IMR-90 (cell line): ENCODE measurements at regions of chr6 and their contacts with region 1.

Region 1: DNA sequence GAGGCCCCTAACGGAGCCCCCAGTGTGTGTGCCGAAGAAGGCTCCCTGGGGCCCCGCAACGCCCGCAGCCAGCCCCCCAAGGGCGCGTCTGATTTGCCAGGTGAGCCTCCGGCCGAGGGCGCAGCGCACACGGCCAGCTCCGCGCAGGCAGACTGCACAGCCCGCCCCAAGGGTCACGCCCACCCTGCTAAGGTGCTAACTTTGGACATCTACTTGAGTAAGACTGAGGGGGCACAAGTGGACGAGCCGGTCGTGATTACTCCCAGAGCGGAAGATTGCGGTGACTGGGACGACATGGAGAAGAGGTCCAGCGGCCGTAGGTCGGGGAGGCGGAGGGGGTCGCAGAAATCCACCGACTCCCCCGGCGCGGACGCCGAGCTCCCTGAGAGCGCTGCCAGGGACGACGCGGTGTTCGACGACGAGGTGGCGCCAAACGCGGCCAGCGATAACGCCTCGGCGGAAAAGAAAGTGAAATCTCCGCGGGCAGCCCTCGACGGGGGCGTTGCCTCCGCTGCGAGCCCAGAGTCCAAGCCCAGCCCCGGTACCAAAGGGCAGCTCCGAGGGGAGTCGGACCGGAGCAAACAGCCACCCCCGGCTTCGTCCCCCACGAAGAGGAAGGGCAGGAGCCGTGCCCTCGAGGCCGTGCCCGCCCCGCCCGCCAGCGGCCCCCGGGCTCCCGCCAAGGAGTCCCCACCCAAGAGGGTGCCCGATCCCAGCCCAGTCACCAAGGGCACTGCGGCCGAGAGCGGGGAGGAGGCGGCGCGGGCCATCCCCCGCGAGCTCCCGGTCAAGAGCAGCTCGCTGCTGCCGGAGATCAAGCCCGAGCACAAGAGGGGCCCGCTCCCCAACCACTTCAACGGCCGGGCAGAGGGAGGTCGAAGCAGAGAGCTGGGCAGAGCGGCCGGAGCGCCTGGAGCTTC is 117.0 kb downstream of the RTN4IP1 start:
- DNase-seq: no peak
- ATAC-seq: peak; percentile 70
- H3K4me3 ChIP-seq: peak overlapping the region; percentile 52
- H3K27ac ChIP-seq: no peak overlapping the region
- H3K4me1 ChIP-seq: peaks cover 7% of the 10 kb centered on the region; the same call in 1 of the 2 replicates
- H3K27me3 ChIP-seq: peaks cover 30% of the 10 kb centered on the region
- CTCF ChIP-seq: peak; percentile 30
- POLR2A ChIP-seq: no peak
- RAD21 ChIP-seq: no peak

Region 2: DNA sequence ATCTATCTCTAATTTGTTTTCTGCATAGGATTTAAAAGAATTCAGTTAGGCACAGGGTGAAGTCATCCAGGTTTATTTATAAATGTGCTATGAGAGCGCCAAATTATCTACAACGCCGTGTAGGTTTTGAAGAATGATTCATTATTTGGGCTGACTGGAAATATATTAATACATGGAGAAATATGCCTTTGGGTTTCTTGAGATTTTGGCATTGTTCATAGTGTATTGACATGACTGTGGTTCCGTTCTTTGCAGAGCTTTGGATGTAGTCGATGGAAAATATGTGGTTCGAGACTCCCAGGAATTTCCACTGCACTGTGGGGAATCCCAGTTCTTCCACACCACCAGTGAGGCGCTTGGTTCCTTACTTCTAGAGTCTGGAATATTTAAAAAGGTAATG is 60.9 kb before region 1 on chr6:
- CTCF ChIA-PET with region 1: interaction called, 3 read pairs
- POLR2A ChIA-PET with region 1: no interaction called
- dilution Hi-C with region 1: no loop called
- in situ Hi-C with region 1: loop called (anchors 10 kb)
- intact Hi-C with region 1: loop called (anchors 2 kb)
- DNase-seq: no peak
- ATAC-seq: no peak
- H3K4me3 ChIP-seq: no peak overlapping the region
- H3K27ac ChIP-seq: no peak overlapping the region
- H3K4me1 ChIP-seq: no peaks in the 10 kb centered on the region
- H3K27me3 ChIP-seq: peaks cover 15% of the 10 kb centered on the region
- CTCF ChIP-seq: no peak
- POLR2A ChIP-seq: no peak
- RAD21 ChIP-seq: no peak

Region 3: GRCh38 chr6:106527966-106528365 is 15.7 kb after region 1 on chr6:
- CTCF ChIA-PET with region 1: no interaction called
- POLR2A ChIA-PET with region 1: no interaction called
- dilution Hi-C with region 1: no loop called
- in situ Hi-C with region 1: no loop called
- intact Hi-C with region 1: loop called (anchors 2 kb)
- DNase-seq: peak; percentile 98
- ATAC-seq: peak; percentile 75
- H3K4me3 ChIP-seq: no peak overlapping the region
- H3K27ac ChIP-seq: no peak overlapping the region
- H3K4me1 ChIP-seq: peaks cover 5% of the 10 kb centered on the region
- H3K27me3 ChIP-seq: no peaks in the 10 kb centered on the region
- CTCF ChIP-seq: no peak
- POLR2A ChIP-seq: no peak
- RAD21 ChIP-seq: no peak

Region 4: GRCh38 chr6:106556368-106556960 is 44.2 kb after region 1 on chr6:
- CTCF ChIA-PET with region 1: interaction called, 4 read pairs
- POLR2A ChIA-PET with region 1: no interaction called
- dilution Hi-C with region 1: no loop called
- in situ Hi-C with region 1: no loop called
- intact Hi-C with region 1: loop called (anchors 2 kb)
- DNase-seq: peak; percentile 47
- ATAC-seq: peak; percentile 49; the same call in 1 of the 2 replicates
- H3K4me3 ChIP-seq: no peak overlapping the region
- H3K27ac ChIP-seq: no peak overlapping the region
- H3K4me1 ChIP-seq: no peaks in the 10 kb centered on the region; the same call in 1 of the 2 replicates
- H3K27me3 ChIP-seq: no peaks in the 10 kb centered on the region
- CTCF ChIP-seq: peak; percentile 54
- POLR2A ChIP-seq: no peak
- RAD21 ChIP-seq: peak; percentile 61